ENCODE measurements at regions of chr7 and their contacts with region 1.

Region 1: DNA sequence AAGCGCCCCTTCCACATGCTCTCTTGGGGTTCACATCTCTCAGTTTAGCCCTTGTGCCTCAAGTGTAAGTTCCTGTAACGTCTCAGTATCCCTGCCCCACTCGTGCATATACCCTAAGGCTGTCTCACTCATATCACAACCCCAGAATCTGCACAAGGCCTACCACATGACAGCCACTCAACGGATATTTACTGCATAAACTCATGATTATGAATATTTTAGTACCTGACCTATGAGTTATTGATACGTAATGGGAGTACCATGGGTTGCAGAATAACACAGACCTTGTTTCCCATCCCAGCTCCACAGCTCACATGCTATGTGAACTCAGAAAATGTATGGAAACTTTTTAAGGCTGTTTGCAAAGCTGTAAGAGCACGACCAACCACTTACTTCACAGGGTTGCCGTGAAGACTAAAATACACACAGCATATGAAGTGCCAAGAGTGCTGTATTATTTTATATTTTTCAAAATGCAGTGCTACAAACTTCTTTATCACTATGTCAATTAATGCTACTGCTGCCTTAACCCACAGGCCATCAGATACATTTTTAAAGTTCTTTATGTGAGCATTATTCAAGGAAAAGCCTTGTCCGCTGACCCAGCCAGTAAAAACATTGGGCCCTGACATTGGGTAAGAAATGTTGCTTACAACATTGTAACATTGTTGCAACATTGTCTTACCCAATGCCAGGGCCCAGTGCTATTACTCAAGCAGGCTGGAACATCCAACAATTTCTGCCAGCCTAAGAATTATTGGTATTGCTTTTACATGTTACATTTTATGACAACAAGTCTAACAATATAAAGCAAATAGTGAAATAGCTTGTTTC is 97.2 kb downstream of the JAZF1 start:
- DNase-seq: no peak
- ATAC-seq: no peak
- H3K4me3 ChIP-seq: no peak overlapping the region
- H3K4me3 Mint-ChIP-seq: no peak overlapping the region
- H3K27ac ChIP-seq: no peak overlapping the region
- H3K27ac Mint-ChIP-seq: no peak overlapping the region
- H3K4me1 ChIP-seq: peaks cover 19 to 26% of the 10 kb centered on the region in 2 donors
- H3K4me1 Mint-ChIP-seq: peaks cover 64% of the 10 kb centered on the region
- H3K27me3 ChIP-seq: no peaks in the 10 kb centered on the region
- H3K27me3 Mint-ChIP-seq: no peaks in the 10 kb centered on the region
- CTCF ChIP-seq: no peak

Region 2: DNA sequence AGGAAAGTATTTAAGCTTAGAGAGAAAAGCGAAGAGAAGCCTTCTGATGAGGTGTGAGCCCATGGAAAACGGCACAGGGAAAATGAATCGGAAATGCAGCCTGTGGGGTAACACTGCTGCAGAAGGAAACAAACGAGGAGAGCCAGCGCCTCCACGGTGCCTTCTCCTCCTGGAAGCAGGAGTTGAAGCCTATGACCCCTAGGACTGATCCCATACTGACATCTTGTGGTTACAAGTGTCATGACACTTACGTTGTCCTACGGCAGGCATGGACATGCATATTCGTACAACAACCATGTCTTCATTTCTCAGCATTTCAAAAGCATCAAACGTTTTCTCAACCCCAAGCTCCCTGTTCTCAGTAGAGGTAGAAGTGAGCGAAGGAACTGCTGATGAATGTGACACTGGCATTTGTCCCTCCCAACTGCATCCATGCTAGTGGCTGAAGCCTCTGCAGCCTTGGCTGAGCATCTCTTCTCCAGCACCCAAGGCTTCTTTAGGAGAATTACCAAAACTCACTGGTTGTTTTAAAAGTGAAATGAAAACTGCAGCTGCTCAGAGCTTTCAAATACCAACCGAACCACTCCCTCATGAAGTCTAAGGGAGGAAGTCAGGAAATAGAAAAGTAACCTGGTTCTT is 63.0 kb before region 1 on chr7:
- CTCF ChIA-PET with region 1: no interaction called
- POLR2A ChIA-PET with region 1: no interaction called
- intact Hi-C with region 1: no loop called
- DNase-seq: peak; percentile 62
- ATAC-seq: peak; percentile 69
- H3K4me3 ChIP-seq: no peak overlapping the region
- H3K4me3 Mint-ChIP-seq: no peak overlapping the region
- H3K27ac ChIP-seq: no peak overlapping the region
- H3K27ac Mint-ChIP-seq: no peak overlapping the region
- H3K4me1 ChIP-seq: no peaks in the 10 kb centered on the region
- H3K4me1 Mint-ChIP-seq: peaks cover 26% of the 10 kb centered on the region
- H3K27me3 ChIP-seq: no peaks in the 10 kb centered on the region
- H3K27me3 Mint-ChIP-seq: no peaks in the 10 kb centered on the region
- CTCF ChIP-seq: peak; percentile 83

Region 3: GRCh38 chr7:28069807-28070206 is 13.6 kb before region 1 on chr7:
- CTCF ChIA-PET with region 1: interaction called, 15 read pairs
- POLR2A ChIA-PET with region 1: no interaction called
- intact Hi-C with region 1: no loop called
- DNase-seq: no peak
- ATAC-seq: no peak
- H3K4me3 ChIP-seq: no peak overlapping the region
- H3K4me3 Mint-ChIP-seq: no peak overlapping the region
- H3K27ac ChIP-seq: no peak overlapping the region
- H3K27ac Mint-ChIP-seq: no peak overlapping the region
- H3K4me1 ChIP-seq: peaks cover 0 to 6% of the 10 kb centered on the region in 2 donors
- H3K4me1 Mint-ChIP-seq: peaks cover 41% of the 10 kb centered on the region
- H3K27me3 ChIP-seq: no peaks in the 10 kb centered on the region
- H3K27me3 Mint-ChIP-seq: no peaks in the 10 kb centered on the region
- CTCF ChIP-seq: no peak

Region 4: GRCh38 chr7:28130277-28130676 is 46.9 kb after region 1 on chr7:
- CTCF ChIA-PET with region 1: no interaction called
- POLR2A ChIA-PET with region 1: no interaction called
- intact Hi-C with region 1: no loop called
- DNase-seq: no peak
- ATAC-seq: no peak
- H3K4me3 ChIP-seq: no peak overlapping the region
- H3K4me3 Mint-ChIP-seq: no peak overlapping the region
- H3K27ac ChIP-seq: no peak overlapping the region
- H3K27ac Mint-ChIP-seq: no peak overlapping the region
- H3K4me1 ChIP-seq: peaks cover 43 to 62% of the 10 kb centered on the region in 2 donors
- H3K4me1 Mint-ChIP-seq: peaks cover 70% of the 10 kb centered on the region
- H3K27me3 ChIP-seq: no peaks in the 10 kb centered on the region
- H3K27me3 Mint-ChIP-seq: no peaks in the 10 kb centered on the region
- CTCF ChIP-seq: no peak